Astrocyte of the cerebellum (primary cell): ENCODE measurements at regions of chr12 and their contacts with region 1.

Region 1: GRCh38 chr12:54370208-54370730 is 6.0 kb upstream of the GPR84 start:
- DNase-seq: peak; percentile 46
- H3K4me3 ChIP-seq: peak overlapping the region; percentile 35
- CTCF ChIP-seq: peak; percentile 86

Region 2: DNA sequence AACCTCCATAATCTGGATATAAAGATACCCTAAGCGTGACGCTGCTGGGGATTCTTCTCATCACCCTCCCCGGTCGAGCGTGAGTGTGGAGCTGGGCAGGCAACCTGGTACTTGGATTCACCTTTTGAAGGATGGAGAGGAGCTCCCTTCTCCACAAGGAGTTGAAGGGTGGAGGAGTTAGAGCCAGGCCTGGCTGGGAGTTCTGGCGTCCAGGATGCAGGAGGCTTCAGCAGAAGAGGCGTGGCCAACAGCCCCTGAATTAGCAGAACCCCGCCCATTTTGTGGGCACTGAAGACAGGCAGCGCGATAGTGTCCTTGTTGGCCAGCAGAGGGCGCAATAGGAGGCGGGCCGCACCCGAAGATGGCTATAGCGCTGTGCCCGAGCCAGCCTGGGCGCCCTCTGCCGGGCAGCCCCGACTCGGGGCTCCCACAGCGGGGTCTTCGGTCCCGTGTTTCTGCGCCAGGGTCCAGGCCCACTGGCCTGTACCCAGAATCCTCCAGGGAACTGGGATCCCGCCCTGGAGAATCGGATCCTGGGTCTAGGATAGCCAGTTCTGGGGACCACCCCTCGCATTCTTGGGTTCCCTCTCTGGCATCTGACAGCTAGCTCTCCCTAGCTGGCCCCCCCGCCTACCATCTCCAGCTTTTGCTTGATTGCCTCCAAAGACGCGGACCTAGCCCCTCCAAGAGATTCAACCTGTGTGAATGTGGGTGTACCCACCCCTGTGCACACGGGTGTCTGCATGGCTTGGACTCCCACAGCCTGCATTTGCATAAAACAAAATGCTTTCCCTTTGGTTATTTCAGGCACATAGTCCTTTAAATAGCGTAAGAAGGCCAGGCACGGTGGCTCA is 155.5 kb before region 1 on chr12:
- in situ Hi-C with region 1: loop called (anchors 5 kb)
- DNase-seq: peak; percentile 66
- H3K4me3 ChIP-seq: peak overlapping the region; percentile 24
- CTCF ChIP-seq: peak; percentile 97

Region 3: DNA sequence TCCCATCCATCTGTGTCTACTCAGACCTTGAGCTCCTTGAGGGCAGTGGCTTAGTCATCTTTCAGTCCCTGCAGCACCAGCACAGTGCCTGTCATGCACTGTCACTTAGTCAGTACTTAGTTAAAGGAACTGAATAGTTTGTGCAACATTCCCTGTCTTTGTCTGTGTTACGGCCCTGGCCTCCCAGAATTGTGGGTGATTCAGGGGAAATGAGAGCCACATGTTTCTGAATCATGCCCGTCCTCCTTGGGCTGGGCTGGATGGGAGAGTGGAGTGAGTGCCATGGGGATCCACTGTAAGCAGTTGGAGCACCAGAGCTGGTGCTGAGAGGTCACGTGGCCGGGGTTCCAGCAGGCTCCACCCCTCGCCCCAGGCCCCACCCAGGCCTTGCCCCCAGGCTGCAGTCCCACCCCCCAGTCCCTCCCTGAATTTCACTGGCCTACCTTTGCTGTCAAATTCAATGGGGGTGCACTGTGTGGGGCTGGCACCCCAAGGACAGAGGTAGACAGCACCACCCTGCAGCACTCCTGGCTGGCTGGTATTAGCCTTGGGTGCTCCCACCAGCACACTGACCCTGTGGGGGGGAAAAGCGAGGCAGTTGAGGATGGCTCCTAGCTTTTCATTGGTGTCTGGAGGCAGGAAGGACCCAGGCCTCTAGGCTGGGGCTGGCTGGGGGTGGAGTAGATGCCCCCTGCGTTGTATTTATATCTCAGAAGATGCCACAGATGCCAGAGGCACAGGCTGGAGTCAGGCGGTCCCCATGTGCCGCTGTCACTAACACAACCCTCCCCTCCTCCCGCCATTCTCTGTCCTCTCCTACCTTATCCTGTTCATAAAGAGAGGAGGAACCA is 41.3 kb after region 1 on chr12:
- in situ Hi-C with region 1: no loop called
- DNase-seq: no peak
- H3K4me3 ChIP-seq: no peak overlapping the region
- CTCF ChIP-seq: no peak